ENCODE measurements at regions of chr9 and their contacts with region 1.

Region 1: GRCh38 chr9:34328987-34329832 is at the starts of genes KIF24 and NUDT2:
- DNase-seq: peak; percentile 97 to 99
- H3K4me3 ChIP-seq: peak within 1 kb of the TSS; percentile 84 to 89
- H3K27ac ChIP-seq: peak within 1 kb of the TSS; percentile 88 to 93
- H3K4me1 ChIP-seq: peaks cover 0 to 9% of the 10 kb centered on the region in 2 donors
- H3K27me3 ChIP-seq: no peaks in the 10 kb centered on the region
- CTCF ChIP-seq: no peak
- total RNA-seq, gene KIF24: 0.21 TPM
- total RNA-seq, gene NUDT2: not detected

Region 2: GRCh38 chr9:34048923-34049697 is 280.1 kb before region 1 on chr9:
- intact Hi-C with region 1: loop called (anchors 2 kb)
- DNase-seq: peak; percentile 94 to 98
- H3K4me3 ChIP-seq: peak overlapping the region; percentile 95 to 98
- H3K27ac ChIP-seq: peak overlapping the region; percentile 85 to 95
- H3K4me1 ChIP-seq: peaks cover 6 to 9% of the 10 kb centered on the region in 2 donors
- H3K27me3 ChIP-seq: no peaks in the 10 kb centered on the region
- CTCF ChIP-seq: no peak

Region 3: GRCh38 chr9:34178520-34179212 is 150.5 kb before region 1 on chr9 and contains the start of gene UBAP1:
- intact Hi-C with region 1: loop called (anchors 5 kb)
- DNase-seq: peak; percentile 92 to 99
- H3K4me3 ChIP-seq: peak within 1 kb of the TSS; percentile 82 to 83
- H3K27ac ChIP-seq: peak within 1 kb of the TSS; percentile 96 to 97
- H3K4me1 ChIP-seq: peaks cover 0 to 3% of the 10 kb centered on the region in 2 donors
- H3K27me3 ChIP-seq: no peaks in the 10 kb centered on the region
- CTCF ChIP-seq: peak in 1 of 3 experiments; percentile 5
- total RNA-seq, gene UBAP1: 26.0 TPM

Region 4: DNA sequence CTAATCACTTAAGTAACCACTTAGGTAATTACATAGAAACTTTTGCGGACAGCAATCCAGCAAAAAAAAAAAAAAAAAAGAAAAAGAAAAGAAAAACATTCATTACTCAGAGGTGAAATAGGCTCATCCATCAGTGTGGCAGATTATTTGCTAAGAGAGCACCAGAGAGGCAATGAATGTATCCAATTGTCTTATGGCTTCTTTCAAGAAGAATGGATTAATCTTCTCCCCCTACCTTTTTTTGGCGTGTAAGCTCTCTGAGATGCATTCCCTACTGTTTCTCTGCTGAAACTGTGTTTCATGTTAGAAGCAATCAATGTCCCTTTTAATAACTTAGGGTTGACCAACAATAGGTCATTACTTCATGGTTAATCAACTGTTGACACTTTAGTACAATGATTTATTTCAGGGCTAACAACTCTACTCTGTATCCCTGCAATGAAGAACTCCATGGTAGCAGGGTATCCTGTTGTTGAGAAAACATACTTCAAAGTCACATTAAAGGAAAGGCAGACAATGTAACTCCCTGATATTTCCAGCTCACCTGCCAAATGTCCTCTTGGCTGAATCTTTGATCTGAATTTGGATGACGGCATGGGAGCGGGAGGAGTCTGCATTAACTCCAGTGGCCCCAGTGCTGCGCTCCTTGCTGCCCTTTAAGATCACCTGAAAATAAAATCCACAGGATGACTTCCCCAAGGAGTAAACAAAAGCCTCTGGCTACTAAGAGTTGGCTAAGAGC is 57.8 kb before region 1 on chr9:
- intact Hi-C with region 1: no loop called
- DNase-seq: no peak
- H3K4me3 ChIP-seq: no peak overlapping the region
- H3K27ac ChIP-seq: no peak overlapping the region
- H3K4me1 ChIP-seq: no peaks in the 10 kb centered on the region
- H3K27me3 ChIP-seq: no peaks in the 10 kb centered on the region
- CTCF ChIP-seq: no peak

Region 5: DNA sequence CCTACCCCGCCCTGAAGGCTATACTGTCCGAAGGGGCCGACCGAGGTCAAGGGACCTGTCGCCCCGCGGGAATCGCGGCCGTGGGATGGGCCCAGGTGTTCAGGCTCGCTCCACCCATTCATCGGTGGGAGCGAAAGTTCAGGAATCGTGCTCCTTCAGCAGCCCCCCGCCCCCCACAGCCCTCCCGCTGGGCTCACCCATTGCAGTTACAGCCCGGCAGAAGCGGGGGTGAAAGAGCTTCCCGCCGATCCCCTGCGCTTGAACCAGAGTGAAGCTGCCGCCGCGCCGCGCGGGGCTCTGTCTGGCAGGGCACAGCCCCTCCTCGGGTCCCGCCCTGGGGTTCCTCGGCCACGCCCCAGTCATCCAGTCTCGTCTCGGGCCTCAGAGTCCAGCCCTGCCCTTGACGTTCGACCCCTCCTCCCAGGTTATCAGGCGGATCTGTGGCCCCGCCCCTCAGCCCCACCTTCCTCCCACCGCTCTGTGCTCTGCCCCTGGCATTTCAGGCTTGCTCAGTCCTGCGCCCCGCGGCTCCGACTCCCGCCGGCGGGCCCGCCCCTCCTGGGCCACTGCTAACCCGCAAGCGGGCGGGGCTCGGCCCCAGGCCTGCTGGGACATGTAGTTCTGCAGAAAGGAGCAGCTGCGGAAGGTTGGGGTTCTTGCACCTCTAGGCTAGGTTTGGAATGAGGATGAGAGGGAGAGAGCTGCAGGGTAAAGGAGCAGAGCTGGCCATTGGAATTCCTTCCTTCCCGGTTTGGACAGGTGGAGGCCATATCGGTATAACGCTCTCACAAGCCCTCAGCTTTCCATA is 47.6 kb after region 1 on chr9 and contains the start of gene MYORG:
- intact Hi-C with region 1: loop called (anchors 1 kb)
- DNase-seq: peak; percentile 88 to 97
- H3K4me3 ChIP-seq: peak within 1 kb of the TSS; percentile 85 to 86
- H3K27ac ChIP-seq: peak within 1 kb of the TSS; percentile 74 to 78
- H3K4me1 ChIP-seq: peaks cover 7 to 16% of the 10 kb centered on the region in 2 donors
- H3K27me3 ChIP-seq: no peaks in the 10 kb centered on the region
- CTCF ChIP-seq: no peak
- total RNA-seq, gene MYORG: 11.0 TPM

Region 6: DNA sequence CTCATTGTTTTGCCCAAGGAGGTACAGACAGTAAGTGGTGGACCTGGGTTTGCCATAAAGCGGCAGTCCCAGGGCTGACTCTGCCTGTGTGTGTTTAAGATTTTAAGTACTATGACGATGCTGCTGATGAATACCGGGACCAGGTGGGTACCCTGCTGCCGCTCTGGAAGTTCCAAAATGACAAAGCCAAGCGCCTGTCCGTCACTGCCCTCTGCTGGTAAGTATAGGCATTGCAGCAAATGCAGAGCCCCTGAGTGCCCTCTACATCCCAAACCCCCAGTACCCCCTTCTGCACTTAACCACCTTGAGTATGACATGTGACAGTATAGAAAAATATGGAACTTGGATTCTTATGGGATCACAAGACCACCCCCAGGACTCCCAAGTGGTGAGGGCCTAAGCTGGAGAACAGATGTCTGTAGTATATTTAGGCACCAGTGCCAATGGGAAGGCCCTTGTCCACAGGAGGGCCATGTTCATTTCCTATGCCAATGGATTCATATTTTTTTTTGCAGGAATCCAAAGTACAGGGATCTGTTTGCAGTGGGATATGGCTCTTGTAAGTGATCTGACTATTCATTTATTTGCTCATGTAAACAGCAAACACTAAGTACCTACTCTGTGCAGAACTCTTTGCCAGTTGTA is 171.5 kb after region 1 on chr9:
- intact Hi-C with region 1: loop called (anchors 10 kb)
- DNase-seq: peak in 1 of 2 donors; percentile 75
- H3K4me3 ChIP-seq: no peak overlapping the region
- H3K27ac ChIP-seq: no peak overlapping the region
- H3K4me1 ChIP-seq: peaks cover 11 to 17% of the 10 kb centered on the region in 2 donors
- H3K27me3 ChIP-seq: no peaks in the 10 kb centered on the region
- CTCF ChIP-seq: peak; percentile 78 to 98 (median 97)

Measured in ascending aorta (tissue), 2 donors.